T-cell (primary cell): ENCODE measurements at regions of chr7 and their contacts with region 1.

Region 1: DNA sequence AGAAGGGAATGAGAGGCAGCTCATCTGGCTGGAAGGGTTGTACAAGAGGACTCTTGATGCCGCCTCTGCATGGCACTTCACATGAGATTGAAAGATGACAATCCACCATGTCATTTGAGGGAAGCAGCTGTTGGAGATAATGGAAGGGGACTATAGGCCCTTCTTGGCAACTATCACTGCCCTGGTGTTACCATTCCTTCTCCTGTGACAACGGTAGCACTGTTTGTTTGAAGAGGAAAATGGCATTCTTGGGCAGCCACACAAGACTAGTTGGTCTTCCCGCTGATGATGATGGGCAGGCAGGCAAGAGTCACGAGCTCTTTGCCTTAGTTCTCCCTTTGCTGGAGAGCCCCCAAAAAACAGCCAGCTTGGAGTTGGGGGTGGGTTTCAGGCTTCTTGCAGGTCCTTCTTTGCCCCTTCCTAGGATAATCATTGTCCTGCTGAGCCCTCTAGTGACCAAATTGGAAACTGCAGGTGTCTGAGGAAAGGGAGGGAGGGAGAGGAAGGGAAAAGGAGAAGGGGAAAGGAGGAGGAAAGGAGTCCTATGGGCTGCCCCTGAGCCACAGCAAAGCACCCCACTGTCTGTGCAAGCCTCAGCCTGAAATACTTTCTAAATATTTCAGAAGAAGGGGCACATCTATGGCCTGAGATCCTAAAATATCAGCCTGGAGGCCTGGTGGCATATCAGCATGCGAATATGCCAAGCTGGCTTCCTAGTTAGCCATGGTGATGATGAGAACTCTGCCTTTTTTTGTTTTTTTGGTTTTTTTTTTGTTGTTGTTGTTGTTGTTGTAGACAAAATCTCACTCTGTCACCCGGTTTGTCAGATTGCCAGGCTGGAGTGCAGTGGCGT is 165.6 kb upstream of the KMT2E start:
- DNase-seq: peak in 26 of 35 experiments; percentile 7 to 68 (median 28)
- ATAC-seq: peak; percentile 32 to 56 (median 52)
- H3K4me3 ChIP-seq: no peak overlapping the region
- H3K4me3 Mint-ChIP-seq: no peak overlapping the region
- H3K27ac ChIP-seq: no peak overlapping the region
- H3K27ac Mint-ChIP-seq: no peak overlapping the region
- H3K4me1 ChIP-seq: no peaks in the 10 kb centered on the region
- H3K4me1 Mint-ChIP-seq: no peaks in the 10 kb centered on the region
- H3K27me3 ChIP-seq: peaks cover 0 to 23% of the 10 kb centered on the region in 2 experiments
- H3K27me3 Mint-ChIP-seq: peaks cover 12 to 20% of the 10 kb centered on the region in 2 donors

Region 2: GRCh38 chr7:104862719-104863118 is 14.4 kb after region 1 on chr7:
- CTCF ChIA-PET with region 1: interaction called in 1 of 2 experiments, 14 read pairs
- POLR2A ChIA-PET with region 1: no interaction called
- DNase-seq: no peak
- ATAC-seq: no peak
- H3K4me3 ChIP-seq: no peak overlapping the region
- H3K4me3 Mint-ChIP-seq: no peak overlapping the region
- H3K27ac ChIP-seq: no peak overlapping the region
- H3K27ac Mint-ChIP-seq: no peak overlapping the region
- H3K4me1 ChIP-seq: peaks cover 9 to 11% of the 10 kb centered on the region in 2 experiments
- H3K4me1 Mint-ChIP-seq: peaks cover 10 to 12% (median 10%) of the 10 kb centered on the region in 3 donors
- H3K27me3 ChIP-seq: peaks cover 0 to 12% of the 10 kb centered on the region in 2 experiments
- H3K27me3 Mint-ChIP-seq: peaks cover 13 to 18% of the 10 kb centered on the region in 2 donors